HCT116 (cell line): ENCODE measurements at regions of chr2 and their contacts with region 1.

Region 1: GRCh38 chr2:178689808-178690207 is 117.4 kb downstream of the TTN start:
- DNase-seq: no peak
- ATAC-seq: no peak
- H3K4me3 ChIP-seq: no peak overlapping the region
- H3K27ac ChIP-seq: no peak overlapping the region
- H3K4me1 ChIP-seq: no peaks in the 10 kb centered on the region
- H3K27me3 ChIP-seq: peaks cover 76% of the 10 kb centered on the region
- CTCF ChIP-seq: no peak
- POLR2A ChIP-seq: no peak
- RAD21 ChIP-seq: no peak

Region 2: GRCh38 chr2:178700922-178701342 is 11.1 kb after region 1 on chr2:
- CTCF ChIA-PET with region 1: interaction called, 28 read pairs
- POLR2A ChIA-PET with region 1: no interaction called
- RAD21 ChIA-PET with region 1: no interaction called
- intact Hi-C with region 1: no loop called
- DNase-seq: peak; percentile 15
- ATAC-seq: 0 out of 2 replicates have a peak, but pooled peaks have one; percentile 44
- H3K4me3 ChIP-seq: no peak overlapping the region
- H3K27ac ChIP-seq: no peak overlapping the region
- H3K4me1 ChIP-seq: no peaks in the 10 kb centered on the region
- H3K27me3 ChIP-seq: peaks cover 49% of the 10 kb centered on the region
- CTCF ChIP-seq: peak; percentile 34 to 86 (median 80); a peak in 5 of 6 replicates
- POLR2A ChIP-seq: no peak
- RAD21 ChIP-seq: peak; percentile 48